Activated CD4-positive, alpha-beta memory T cell treated with anti-CD3 and anti-CD28 coated beads, Interleukin-2, amount 10 ng/mL, durations not matched to agents 7 days and 5 days (primary cell): ENCODE measurements at regions of chr1 and their contacts with region 1.

Region 1: DNA sequence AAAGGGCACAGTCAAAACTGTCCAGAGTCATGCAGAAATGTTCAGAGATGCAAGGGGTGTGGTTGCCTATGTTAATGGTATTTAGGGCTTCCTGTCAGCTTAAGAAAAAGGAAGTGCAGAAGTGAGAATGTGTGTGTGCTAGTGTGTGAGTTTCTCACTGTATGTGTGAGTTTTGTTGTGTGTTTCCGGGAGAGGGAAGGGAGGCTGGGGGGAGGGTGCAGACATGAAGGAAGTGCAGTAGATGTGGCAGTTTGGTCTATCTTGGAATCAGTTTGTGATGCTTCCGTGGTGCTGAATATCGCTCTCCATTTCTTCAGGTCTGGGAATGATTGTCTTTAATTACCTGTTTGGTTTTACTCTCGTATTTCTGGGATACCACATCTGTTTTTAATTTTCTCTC is 16.5 kb upstream of the ATP6V1G3 start:
- DNase-seq: peak; percentile 76
- H3K4me3 Mint-ChIP-seq: peak overlapping the region; percentile 47
- H3K27ac Mint-ChIP-seq: peak overlapping the region; percentile 87
- H3K4me1 Mint-ChIP-seq: peaks cover 48% of the 10 kb centered on the region
- H3K27me3 Mint-ChIP-seq: no peaks in the 10 kb centered on the region

Region 2: GRCh38 chr1:198520524-198521254 is 36.3 kb before region 1 on chr1:
- CTCF ChIA-PET with region 1: interaction called, 3 read pairs
- POLR2A ChIA-PET with region 1: interaction called, 21 read pairs
- DNase-seq: no peak
- H3K4me3 Mint-ChIP-seq: peak overlapping the region; percentile 53
- H3K27ac Mint-ChIP-seq: peak overlapping the region; percentile 81
- H3K4me1 Mint-ChIP-seq: peaks cover 63% of the 10 kb centered on the region
- H3K27me3 Mint-ChIP-seq: no peaks in the 10 kb centered on the region

Region 3: GRCh38 chr1:199029855-199030254 is 472.9 kb after region 1 on chr1:
- CTCF ChIA-PET with region 1: no interaction called
- POLR2A ChIA-PET with region 1: no interaction called
- DNase-seq: no peak
- H3K4me3 Mint-ChIP-seq: no peak overlapping the region
- H3K27ac Mint-ChIP-seq: no peak overlapping the region
- H3K4me1 Mint-ChIP-seq: peaks cover 41% of the 10 kb centered on the region
- H3K27me3 Mint-ChIP-seq: no peaks in the 10 kb centered on the region